K562 (cell line): ENCODE measurements at regions of chr7 and their contacts with region 1.

Region 1: DNA sequence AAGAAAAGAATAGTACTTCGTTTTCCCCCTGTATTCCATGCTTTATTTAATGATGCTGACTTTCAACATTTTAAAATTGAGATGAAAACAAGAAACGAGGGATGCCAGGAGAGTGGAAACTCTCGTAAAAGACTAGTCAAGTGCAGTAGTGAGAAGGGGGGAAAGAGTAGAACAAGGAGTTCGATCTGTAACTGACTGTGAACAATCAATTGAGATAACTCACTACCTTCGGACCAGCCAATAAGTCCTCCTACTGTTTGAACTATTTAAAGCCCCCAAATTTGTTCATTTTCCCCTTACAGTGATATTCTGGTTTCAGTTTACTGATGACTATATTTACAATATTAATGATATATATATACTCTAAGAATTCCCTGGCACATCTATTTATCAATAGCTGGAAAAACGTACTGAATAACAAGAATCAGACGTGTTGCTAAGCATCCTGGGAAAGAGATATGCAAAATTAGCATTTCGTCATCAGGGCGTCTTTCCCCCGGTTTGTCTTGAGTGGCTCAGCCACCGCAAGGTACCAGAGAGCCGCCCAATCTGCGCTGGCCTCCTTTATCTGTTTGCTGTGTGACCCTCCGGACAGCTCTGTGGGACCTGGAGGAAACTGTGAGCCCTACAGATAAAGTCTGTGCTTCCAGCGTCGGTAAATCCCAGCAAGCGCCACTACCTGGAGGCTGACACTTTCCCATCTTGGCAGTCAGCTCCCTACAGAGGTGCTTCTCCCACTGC is 41.1 kb downstream of the PDIA4 start:
- DNase-seq: peak; percentile 97 to 98 (median 98)
- ATAC-seq: peak; percentile 88
- H3K4me3 ChIP-seq: peak overlapping the region; percentile 53
- H3K27ac ChIP-seq: peak overlapping the region; percentile 75
- H3K4me1 ChIP-seq: peaks cover 10 to 27% of the 10 kb centered on the region in 2 experiments; a peak in 4 of 5 replicates
- H3K27me3 ChIP-seq: no peaks in the 10 kb centered on the region
- CTCF ChIP-seq: no peak; a peak in 1 of 6 replicates
- EP300 ChIP-seq: no peak; the same call in none of the 2 replicates
- POLR2A ChIP-seq: no peak
- RAD21 ChIP-seq: peak; percentile 5 to 13; a peak in 2 of 4 replicates

Region 2: GRCh38 chr7:148556924-148557323 is 430.3 kb before region 1 on chr7:
- CTCF ChIA-PET with region 1: no interaction called
- POLR2A ChIA-PET with region 1: no interaction called
- in situ Hi-C with region 1: no loop called
- intact Hi-C with region 1: no loop called
- DNase-seq: no peak
- ATAC-seq: no peak
- H3K4me3 ChIP-seq: no peak overlapping the region
- H3K27ac ChIP-seq: no peak overlapping the region
- H3K4me1 ChIP-seq: no peaks in the 10 kb centered on the region
- H3K27me3 ChIP-seq: peaks cover 0 to 10% of the 10 kb centered on the region in 2 experiments; a peak in 2 of 5 replicates
- CTCF ChIP-seq: no peak
- EP300 ChIP-seq: no peak
- POLR2A ChIP-seq: no peak
- RAD21 ChIP-seq: no peak

Region 3: DNA sequence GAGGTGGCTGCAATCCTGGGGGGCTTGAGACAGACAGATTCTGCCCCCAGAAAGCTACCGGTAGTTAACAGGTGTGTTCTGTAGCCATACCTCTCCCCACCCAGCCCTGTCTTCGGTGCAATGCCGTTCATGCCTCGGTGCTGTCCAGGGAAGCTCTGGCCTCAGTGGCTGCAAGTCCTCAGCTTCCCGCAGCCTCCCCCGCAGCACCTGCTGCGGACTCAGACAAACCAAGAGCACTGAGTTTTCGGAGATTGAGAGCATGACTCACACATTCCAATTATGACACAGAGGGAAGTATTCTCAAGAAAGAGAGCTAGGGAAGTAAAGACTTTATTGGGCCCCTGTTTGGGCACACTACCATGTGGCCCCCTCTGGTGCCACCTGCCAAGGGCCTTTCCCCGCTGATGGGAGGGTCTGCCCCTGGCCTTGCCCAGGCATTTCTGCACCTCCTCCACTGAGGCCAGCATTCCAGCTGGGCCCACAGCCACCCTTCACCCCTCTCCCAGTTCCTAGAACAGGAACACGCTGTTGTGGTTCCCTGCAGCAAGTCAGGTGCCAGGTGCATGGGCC is 72.9 kb before region 1 on chr7:
- CTCF ChIA-PET with region 1: no interaction called
- POLR2A ChIA-PET with region 1: no interaction called
- in situ Hi-C with region 1: no loop called
- intact Hi-C with region 1: no loop called
- DNase-seq: peak in 3 of 4 experiments; percentile 38 to 78 (median 60)
- ATAC-seq: peak; percentile 84
- H3K4me3 ChIP-seq: no peak overlapping the region
- H3K27ac ChIP-seq: no peak overlapping the region
- H3K4me1 ChIP-seq: peaks cover 7 to 10% of the 10 kb centered on the region in 2 experiments
- H3K27me3 ChIP-seq: peaks cover 17 to 34% of the 10 kb centered on the region in 2 experiments
- CTCF ChIP-seq: no peak
- EP300 ChIP-seq: peak; percentile 50; the same call in 1 of the 2 replicates
- POLR2A ChIP-seq: no peak
- RAD21 ChIP-seq: 0 out of 4 replicates have a peak, but pooled peaks of 1 of the 2 experiments have one; percentile 10

Region 4: DNA sequence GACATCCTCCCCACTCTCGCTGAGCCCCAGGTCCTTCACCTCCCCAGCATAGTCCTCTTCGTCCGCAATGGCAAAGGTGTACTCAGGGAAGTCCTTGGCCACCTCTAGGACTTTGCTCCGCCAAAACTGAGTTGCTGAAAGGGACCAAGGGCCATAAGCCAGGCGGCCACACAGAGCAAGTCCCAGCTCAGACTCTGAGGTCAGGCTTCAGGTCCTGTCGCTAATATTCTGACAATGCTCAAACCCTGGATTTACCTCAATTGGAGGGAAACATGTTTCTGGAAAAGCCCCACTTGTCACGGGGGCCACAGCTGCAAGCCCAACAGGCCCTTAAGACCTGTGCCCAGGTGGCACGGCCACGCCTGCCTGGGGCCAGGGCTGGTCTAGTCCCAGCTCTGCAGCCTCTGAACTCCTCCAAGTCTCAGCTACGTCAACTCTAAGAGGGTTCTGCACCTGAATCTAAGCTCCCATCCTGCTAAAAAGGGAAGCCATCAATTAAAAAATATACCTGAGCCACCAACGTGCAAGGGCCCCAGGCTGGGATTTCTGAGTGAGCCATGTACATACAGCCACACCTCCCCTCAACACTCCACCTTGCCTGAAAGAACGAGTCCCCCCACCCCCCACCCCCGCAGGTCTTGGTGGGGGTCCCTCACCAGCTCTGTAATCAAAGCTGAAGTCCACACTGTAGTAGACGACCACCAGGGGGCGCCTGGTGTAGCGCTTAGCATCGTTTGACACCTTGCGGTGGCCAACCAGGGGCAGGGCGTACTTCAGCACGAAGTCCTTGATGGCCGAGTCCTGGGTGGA is 18.3 kb after region 1 on chr7:
- CTCF ChIA-PET with region 1: interaction called, 6 read pairs
- POLR2A ChIA-PET with region 1: interaction called, 13 read pairs
- in situ Hi-C with region 1: no loop called
- intact Hi-C with region 1: no loop called
- DNase-seq: peak; percentile 81 to 92 (median 86)
- ATAC-seq: peak; percentile 94
- H3K4me3 ChIP-seq: no peak overlapping the region
- H3K27ac ChIP-seq: no peak overlapping the region
- H3K4me1 ChIP-seq: peaks cover 0 to 6% of the 10 kb centered on the region in 2 experiments; a peak in 1 of 5 replicates
- H3K27me3 ChIP-seq: no peaks in the 10 kb centered on the region
- CTCF ChIP-seq: peak; percentile 89 to 98 (median 91)
- EP300 ChIP-seq: no peak
- POLR2A ChIP-seq: no peak
- RAD21 ChIP-seq: peak; percentile 75 to 78

Region 5: DNA sequence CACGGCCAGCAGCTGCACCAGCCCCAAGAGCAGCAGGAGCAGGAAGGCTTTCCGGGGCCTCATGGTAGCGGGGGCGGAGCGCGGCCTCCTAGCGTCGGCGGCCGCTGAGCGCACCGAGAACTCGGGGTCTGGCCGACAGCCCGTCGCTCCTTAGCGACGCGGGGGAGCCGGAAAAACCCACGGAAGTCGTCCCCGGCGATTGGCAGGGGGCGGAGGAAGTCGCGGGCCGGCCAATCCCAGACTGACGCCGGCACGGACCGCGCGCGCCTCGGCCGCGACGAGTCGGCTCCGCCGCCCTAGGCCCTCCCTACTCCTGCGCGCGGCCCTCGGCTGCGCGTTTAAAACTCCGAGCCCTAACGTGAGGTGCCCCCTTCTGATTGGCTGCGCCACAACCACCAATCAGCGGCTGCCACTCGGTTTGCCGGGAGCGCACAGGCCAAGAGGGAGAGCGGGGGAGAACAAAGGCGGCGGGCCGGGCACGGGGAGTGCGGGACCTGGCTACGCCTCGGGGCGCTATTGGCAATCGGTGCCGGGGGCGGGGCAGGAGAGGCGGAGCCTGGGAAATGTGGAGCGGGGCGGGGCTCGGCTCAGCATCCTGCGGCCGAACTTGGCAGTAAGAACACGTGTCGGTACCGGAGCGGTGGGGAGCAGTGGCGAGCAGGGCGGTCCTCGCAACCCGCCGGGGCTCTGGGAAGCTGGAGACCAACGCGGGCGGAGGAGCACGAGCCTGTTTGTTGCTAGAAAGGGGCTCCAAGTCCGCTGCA is 41.3 kb after region 1 on chr7 and contains the start of gene PDIA4:
- CTCF ChIA-PET with region 1: no interaction called
- POLR2A ChIA-PET with region 1: interaction called, 4 read pairs
- in situ Hi-C with region 1: no loop called
- intact Hi-C with region 1: loop called (anchors 1 kb)
- DNase-seq: peak; percentile 100
- ATAC-seq: peak; percentile 96
- H3K4me3 ChIP-seq: peak within 1 kb of the TSS; percentile 85
- H3K27ac ChIP-seq: peak within 1 kb of the TSS; percentile 92
- H3K4me1 ChIP-seq: peaks cover 14 to 18% of the 10 kb centered on the region in 2 experiments; a peak in 4 of 5 replicates
- H3K27me3 ChIP-seq: no peaks in the 10 kb centered on the region
- CTCF ChIP-seq: peak in 2 of 3 experiments; percentile 28 to 52; a peak in 3 of 6 replicates
- EP300 ChIP-seq: peak; percentile 34
- POLR2A ChIP-seq: peak; percentile 89
- RAD21 ChIP-seq: peak; percentile 12 to 23; a peak in 2 of 4 replicates
- polyA plus RNA-seq, gene PDIA4: 9.1 to 14.5 TPM

Region 6: DNA sequence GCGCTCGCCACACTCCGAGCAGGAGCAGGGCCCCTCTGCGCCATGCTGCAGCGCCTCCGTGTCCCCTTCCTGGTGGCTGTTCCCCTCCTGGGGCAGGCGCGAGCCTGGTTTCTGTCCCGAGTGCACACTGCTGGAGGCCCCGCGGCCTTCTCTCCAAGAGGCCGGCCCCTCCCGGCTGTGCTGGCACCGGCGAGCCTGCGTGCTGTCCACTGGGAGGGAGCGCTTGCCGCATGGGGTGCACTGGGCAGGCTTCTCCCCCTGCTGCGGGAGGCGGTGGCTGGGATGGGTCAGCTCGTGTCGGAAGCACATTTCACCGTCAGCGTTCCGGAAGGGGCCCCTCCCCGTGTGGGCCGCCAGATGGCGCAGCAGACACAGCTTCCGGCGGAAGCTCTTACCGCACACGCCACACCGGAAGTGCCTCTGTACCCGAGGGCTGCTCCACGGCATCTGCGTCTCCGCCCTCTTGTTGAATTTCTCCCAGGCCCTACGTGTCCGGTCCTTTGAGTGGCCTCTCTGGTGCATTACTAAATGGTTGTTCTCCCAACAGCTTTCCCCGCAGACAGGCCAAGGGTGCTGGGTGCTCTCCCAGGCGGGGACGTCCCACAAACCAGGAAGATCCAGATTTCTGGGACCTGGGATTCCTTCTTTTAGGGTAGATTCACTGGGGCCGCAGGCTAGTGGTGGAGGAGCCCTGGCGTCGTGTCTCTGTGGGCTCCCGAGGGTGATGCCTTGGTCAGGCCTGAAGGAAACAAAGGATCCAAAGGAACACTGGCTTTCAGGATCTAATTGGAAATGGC is 84.7 kb after region 1 on chr7:
- CTCF ChIA-PET with region 1: no interaction called
- POLR2A ChIA-PET with region 1: no interaction called
- in situ Hi-C with region 1: no loop called
- intact Hi-C with region 1: loop called (anchors 5 kb)
- DNase-seq: peak in 3 of 4 experiments; percentile 24 to 48 (median 33)
- ATAC-seq: peak; percentile 74
- H3K4me3 ChIP-seq: no peak overlapping the region
- H3K27ac ChIP-seq: no peak overlapping the region
- H3K4me1 ChIP-seq: peaks cover 0 to 12% of the 10 kb centered on the region in 2 experiments; a peak in 1 of 5 replicates
- H3K27me3 ChIP-seq: no peaks in the 10 kb centered on the region
- CTCF ChIP-seq: peak; percentile 42 to 50 (median 50); a peak in 5 of 6 replicates
- EP300 ChIP-seq: no peak
- POLR2A ChIP-seq: no peak
- RAD21 ChIP-seq: peak in 1 of 2 experiments; percentile 48; a peak in 2 of 4 replicates

Region 7: DNA sequence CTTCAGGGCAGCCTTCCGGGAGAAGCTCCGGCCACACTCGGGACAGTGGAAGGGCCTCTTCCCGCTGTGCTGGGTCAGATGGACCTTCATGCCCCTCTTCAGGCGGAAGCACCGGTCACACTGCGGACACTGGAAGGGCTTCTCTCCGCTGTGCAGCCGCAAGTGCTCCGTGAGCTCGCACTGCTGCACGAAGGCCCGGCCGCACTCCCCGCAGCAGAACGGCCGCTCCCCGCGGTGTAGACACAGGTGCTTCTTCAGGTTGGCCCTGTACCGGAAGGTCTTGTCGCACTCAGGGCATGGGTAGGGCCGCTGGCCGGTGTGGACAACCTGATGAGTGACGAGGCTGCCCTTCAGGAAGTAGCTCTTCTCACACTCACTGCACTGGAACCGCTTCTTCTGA is 117.6 kb after region 1 on chr7:
- CTCF ChIA-PET with region 1: no interaction called
- POLR2A ChIA-PET with region 1: no interaction called
- in situ Hi-C with region 1: no loop called
- intact Hi-C with region 1: no loop called
- DNase-seq: no peak
- ATAC-seq: peak; percentile 11; the same call in 2 of the 3 replicates
- H3K4me3 ChIP-seq: no peak overlapping the region
- H3K27ac ChIP-seq: no peak overlapping the region
- H3K4me1 ChIP-seq: peaks cover 0 to 10% of the 10 kb centered on the region in 2 experiments; a peak in 2 of 5 replicates
- H3K27me3 ChIP-seq: peaks cover 25 to 30% of the 10 kb centered on the region in 2 experiments
- CTCF ChIP-seq: no peak
- EP300 ChIP-seq: no peak
- POLR2A ChIP-seq: no peak
- RAD21 ChIP-seq: no peak

Region 8: DNA sequence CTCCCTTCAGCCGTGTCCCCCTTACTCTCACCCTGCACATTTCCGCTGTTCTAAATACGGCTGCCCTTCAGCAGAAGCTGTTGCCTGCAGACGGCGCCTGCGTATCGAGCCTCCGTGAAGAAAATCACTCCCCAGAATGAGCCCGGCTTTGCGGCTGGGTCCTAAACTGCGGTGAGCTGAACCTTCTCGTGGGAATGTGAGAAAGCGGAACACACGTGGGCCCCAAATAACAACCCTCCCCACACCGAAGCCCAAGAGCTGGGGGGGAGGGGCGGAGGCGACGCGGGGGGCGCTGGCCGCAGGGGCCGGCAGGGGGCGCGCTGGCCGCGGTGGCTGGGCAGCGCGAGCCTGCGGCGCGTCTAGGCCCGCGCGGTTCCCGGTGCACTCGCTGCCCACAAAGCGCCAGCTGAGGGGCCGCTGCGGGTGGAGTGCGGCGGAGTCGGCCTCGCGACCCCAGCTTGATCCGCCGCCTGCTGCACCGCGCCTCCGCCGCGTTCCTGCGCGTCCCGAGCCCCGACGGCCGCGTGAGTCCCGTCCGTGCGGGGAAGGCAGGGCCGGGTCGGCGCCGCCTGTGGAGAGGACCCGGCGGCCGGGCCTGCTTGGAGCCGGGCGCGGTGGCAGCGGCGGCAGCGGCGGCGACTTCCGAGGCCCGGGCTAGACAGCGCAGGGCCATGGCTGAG is 160.0 kb after region 1 on chr7 and contains the start of gene ZNF398:
- CTCF ChIA-PET with region 1: no interaction called
- POLR2A ChIA-PET with region 1: interaction called, 3 read pairs
- in situ Hi-C with region 1: no loop called
- intact Hi-C with region 1: loop called (anchors 5 kb)
- DNase-seq: peak; percentile 93 to 97 (median 97)
- ATAC-seq: peak; percentile 81
- H3K4me3 ChIP-seq: peak within 1 kb of the TSS; percentile 88
- H3K27ac ChIP-seq: peak within 1 kb of the TSS; percentile 82
- H3K4me1 ChIP-seq: peaks cover 16 to 40% of the 10 kb centered on the region in 2 experiments; a peak in 3 of 5 replicates
- H3K27me3 ChIP-seq: no peaks in the 10 kb centered on the region
- CTCF ChIP-seq: peak; percentile 52 to 89 (median 71)
- EP300 ChIP-seq: no peak
- POLR2A ChIP-seq: peak; percentile 85
- RAD21 ChIP-seq: peak in 1 of 2 experiments; percentile 28; a peak in 3 of 4 replicates
- polyA plus RNA-seq, gene ZNF398: 4.0 to 4.4 TPM